ENCODE measurements at regions of chr15 and their contacts with region 1.

Region 1: GRCh38 chr15:77013776-77014131 is 18.8 kb downstream of the PSTPIP1 start:
- DNase-seq: peak; percentile 95
- ATAC-seq: peak; percentile 89
- H3K4me3 Mint-ChIP-seq: peak overlapping the region; percentile 54
- H3K27ac Mint-ChIP-seq: peak overlapping the region; percentile 90
- H3K4me1 Mint-ChIP-seq: peaks cover 92% of the 10 kb centered on the region
- H3K27me3 Mint-ChIP-seq: no peaks in the 10 kb centered on the region

Region 2: DNA sequence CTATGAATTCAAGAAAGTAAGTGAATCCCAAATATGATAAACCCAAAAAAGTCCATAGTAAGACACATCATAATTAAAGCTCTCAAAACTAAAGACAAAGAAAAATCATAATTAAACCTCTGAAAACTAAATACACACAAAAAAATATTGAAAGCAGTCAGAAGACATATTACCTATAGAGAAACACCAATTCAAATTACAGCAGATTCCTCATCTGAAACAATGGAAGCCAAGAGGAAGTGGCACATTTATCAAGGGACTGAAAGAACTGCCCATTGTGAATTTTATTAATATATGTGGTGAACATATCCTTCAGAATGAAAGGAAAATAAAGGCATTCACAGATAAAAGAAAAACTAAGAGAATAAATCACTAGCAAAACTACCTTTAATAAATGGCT is 236.8 kb before region 1 on chr15:
- CTCF ChIA-PET with region 1: no interaction called
- POLR2A ChIA-PET with region 1: no interaction called
- intact Hi-C with region 1: no loop called
- DNase-seq: no peak
- ATAC-seq: no peak
- H3K4me3 Mint-ChIP-seq: no peak overlapping the region
- H3K27ac Mint-ChIP-seq: no peak overlapping the region
- H3K4me1 Mint-ChIP-seq: peaks cover 10% of the 10 kb centered on the region
- H3K27me3 Mint-ChIP-seq: no peaks in the 10 kb centered on the region

Region 3: GRCh38 chr15:76994971-76995945 is 18.5 kb before region 1 on chr15 and contains the start of gene PSTPIP1:
- CTCF ChIA-PET with region 1: interaction called, 13 read pairs
- POLR2A ChIA-PET with region 1: interaction called, 7 read pairs
- intact Hi-C with region 1: loop called (anchors 1 to 2 kb)
- DNase-seq: peak; percentile 87
- ATAC-seq: peak; percentile 62
- H3K4me3 Mint-ChIP-seq: peak within 1 kb of the TSS; percentile 97
- H3K27ac Mint-ChIP-seq: peak within 1 kb of the TSS; percentile 96
- H3K4me1 Mint-ChIP-seq: peaks cover 57% of the 10 kb centered on the region
- H3K27me3 Mint-ChIP-seq: no peaks in the 10 kb centered on the region
- total RNA-seq, gene PSTPIP1: 100 to 125 TPM

Region 4: DNA sequence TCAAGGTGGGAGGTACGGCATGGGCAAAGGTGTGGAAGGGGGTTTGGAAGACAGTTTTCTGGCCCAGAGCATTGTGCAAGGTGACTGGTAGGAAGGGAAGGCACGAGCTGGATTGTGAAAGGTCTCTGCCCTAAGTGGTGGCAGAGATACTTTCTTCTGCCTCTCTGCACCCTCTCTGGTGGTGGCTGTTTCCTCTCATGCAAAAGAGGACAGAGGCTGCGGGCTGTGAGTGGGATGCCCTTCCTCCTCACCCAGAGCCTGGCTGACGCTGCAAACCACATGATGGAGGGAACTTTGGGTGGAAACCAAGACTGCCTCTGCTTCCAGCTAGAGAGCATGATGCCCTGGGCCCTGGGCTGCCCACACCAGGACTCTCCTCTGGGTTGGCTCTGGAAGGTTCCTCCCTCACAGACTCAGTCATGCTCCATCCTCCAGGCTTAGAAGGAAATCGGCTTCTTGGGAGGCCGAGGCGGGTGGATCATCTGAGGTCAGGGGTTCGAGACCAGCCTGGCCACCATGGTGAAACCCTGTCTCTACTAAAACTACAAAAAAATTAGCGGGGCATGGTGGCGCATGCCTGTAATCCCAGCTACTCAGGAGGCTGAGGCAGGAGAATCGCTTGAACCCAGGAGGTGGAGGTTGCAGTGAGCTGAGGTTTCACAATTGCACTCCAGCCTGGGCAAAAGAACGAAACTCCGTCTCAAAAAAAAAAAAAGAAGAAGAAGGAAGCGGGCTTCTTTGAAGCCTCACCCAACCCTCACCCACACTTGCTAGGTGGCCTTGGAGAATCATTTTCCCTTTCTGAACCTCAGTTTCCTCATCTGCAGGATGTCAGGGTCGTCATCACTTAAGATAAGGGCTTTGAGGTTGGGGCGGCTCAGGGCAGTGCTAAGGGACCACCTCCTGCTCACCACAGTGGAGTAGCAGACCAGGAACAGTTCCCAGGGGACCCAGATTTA is 10.5 kb before region 1 on chr15:
- CTCF ChIA-PET with region 1: interaction called, 13 read pairs
- POLR2A ChIA-PET with region 1: interaction called, 7 read pairs
- intact Hi-C with region 1: loop called (anchors 1 kb)
- DNase-seq: peak; percentile 88
- ATAC-seq: peak; percentile 86
- H3K4me3 Mint-ChIP-seq: peak overlapping the region; percentile 67
- H3K27ac Mint-ChIP-seq: peak overlapping the region; percentile 94
- H3K4me1 Mint-ChIP-seq: peaks cover 84% of the 10 kb centered on the region
- H3K27me3 Mint-ChIP-seq: no peaks in the 10 kb centered on the region

Region 5: DNA sequence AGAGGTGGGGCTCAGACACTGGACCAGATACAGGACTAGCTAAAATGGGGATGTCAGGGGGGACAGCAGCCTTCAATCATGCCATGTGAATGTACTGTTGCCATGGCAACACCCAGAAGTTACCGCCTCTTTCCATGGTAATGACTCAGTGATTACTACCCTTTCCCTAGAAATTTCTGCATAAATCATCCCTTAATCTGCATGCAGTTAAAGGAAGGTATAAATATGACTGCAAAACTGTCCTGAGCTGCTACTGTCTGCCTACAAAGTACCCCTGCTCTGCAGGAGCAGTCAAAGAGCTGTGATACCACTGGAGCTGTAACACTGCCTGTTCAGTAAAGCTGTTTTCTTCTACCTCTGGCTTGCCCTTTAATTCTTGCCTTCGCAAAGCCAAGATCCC is 237.9 kb after region 1 on chr15:
- CTCF ChIA-PET with region 1: no interaction called
- POLR2A ChIA-PET with region 1: no interaction called
- intact Hi-C with region 1: no loop called
- DNase-seq: peak; percentile 30
- ATAC-seq: peak; percentile 57
- H3K4me3 Mint-ChIP-seq: no peak overlapping the region
- H3K27ac Mint-ChIP-seq: no peak overlapping the region
- H3K4me1 Mint-ChIP-seq: peaks cover 5% of the 10 kb centered on the region
- H3K27me3 Mint-ChIP-seq: no peaks in the 10 kb centered on the region